GM12878 (cell line): ENCODE measurements at regions of chr4 and their contacts with region 1.

Region 1: DNA sequence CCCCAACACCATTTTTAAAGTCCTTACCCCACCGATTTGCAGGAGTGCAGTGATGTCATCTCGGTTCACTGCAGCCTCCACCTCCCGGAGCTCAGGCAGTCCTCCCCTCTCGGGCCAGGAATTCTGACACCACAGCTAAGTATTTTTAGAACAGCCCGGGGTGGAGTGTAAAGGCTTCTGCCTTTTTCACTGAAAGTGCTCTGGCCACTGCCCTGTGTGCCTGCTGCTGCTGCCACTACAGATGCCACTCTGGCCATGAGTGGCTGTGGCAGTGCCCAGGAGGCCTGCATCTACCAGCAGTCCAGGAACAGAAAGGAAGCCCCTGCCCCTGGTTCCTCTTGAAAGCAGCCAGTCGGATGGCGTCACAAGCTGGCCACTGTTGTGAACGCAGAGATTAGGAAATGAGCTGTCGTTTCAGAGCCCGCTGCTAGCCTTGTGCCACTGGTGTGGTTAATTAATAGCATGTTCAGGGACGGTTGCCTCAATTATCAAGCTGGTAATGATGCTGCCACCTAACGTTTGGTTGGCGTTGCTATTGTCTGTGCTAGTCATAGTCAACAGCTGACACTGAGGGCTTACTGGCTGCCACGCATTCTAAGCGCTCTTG is 23.6 kb upstream of the TBC1D14 start:
- DNase-seq: peak; percentile 34
- ATAC-seq: peak; percentile 94
- H3K4me3 ChIP-seq: no peak overlapping the region
- H3K27ac ChIP-seq: no peak overlapping the region
- H3K4me1 ChIP-seq: no peaks in the 10 kb centered on the region
- H3K27me3 ChIP-seq: no peaks in the 10 kb centered on the region
- CTCF ChIP-seq: peak; percentile 26 to 51 (median 35); a peak in 4 of 6 replicates
- EP300 ChIP-seq: no peak
- POLR2A ChIP-seq: no peak
- RAD21 ChIP-seq: 0 out of 2 replicates have a peak, but pooled peaks have one; percentile 1

Region 2: GRCh38 chr4:6777636-6778281 is 108.3 kb before region 1 on chr4:
- CTCF ChIA-PET with region 1: interaction called, 15 read pairs
- POLR2A ChIA-PET with region 1: no interaction called
- RAD21 ChIA-PET with region 1: no interaction called
- SMC1A ChIA-PET with region 1: interaction called, 8 read pairs
- in situ Hi-C with region 1: no loop called
- intact Hi-C with region 1: no loop called
- DNase-seq: no peak
- ATAC-seq: peak; percentile 39
- H3K4me3 ChIP-seq: no peak overlapping the region
- H3K27ac ChIP-seq: no peak overlapping the region
- H3K4me1 ChIP-seq: peaks cover 10% of the 10 kb centered on the region; the same call in 1 of the 2 replicates
- H3K27me3 ChIP-seq: peaks cover 0 to 3% of the 10 kb centered on the region in 2 experiments; a peak in 1 of 4 replicates
- CTCF ChIP-seq: peak; percentile 16 to 55 (median 30); a peak in 4 of 6 replicates
- EP300 ChIP-seq: no peak
- POLR2A ChIP-seq: no peak
- RAD21 ChIP-seq: peak; percentile 41; the same call in 1 of the 2 replicates